Panc1 (cell line): ENCODE measurements at regions of chr18 and their contacts with region 1.

Region 1: GRCh38 chr18:55401638-55402191 is 186.3 kb downstream of the TCF4 start:
- DNase-seq: no peak
- ATAC-seq: peak; percentile 89
- H3K4me3 ChIP-seq: peak overlapping the region; percentile 24 to 25; a peak in 3 of 4 replicates
- H3K27ac ChIP-seq: peak overlapping the region; percentile 90
- H3K4me1 ChIP-seq: peaks cover 9% of the 10 kb centered on the region
- H3K27me3 ChIP-seq: no peaks in the 10 kb centered on the region
- CTCF ChIP-seq: no peak

Region 2: GRCh38 chr18:55096261-55096951 is 305.3 kb before region 1 on chr18:
- CTCF ChIA-PET with region 1: no interaction called
- POLR2A ChIA-PET with region 1: no interaction called
- in situ Hi-C with region 1: no loop called
- intact Hi-C with region 1: no loop called
- DNase-seq: no peak
- ATAC-seq: no peak
- H3K4me3 ChIP-seq: no peak overlapping the region
- H3K27ac ChIP-seq: no peak overlapping the region
- H3K4me1 ChIP-seq: no peaks in the 10 kb centered on the region
- H3K27me3 ChIP-seq: no peaks in the 10 kb centered on the region
- CTCF ChIP-seq: peak; percentile 22

Region 3: GRCh38 chr18:55422456-55423180 is 20.9 kb after region 1 on chr18:
- CTCF ChIA-PET with region 1: no interaction called
- POLR2A ChIA-PET with region 1: no interaction called
- in situ Hi-C with region 1: no loop called
- intact Hi-C with region 1: no loop called
- DNase-seq: no peak
- ATAC-seq: no peak
- H3K4me3 ChIP-seq: no peak overlapping the region; a peak in 1 of 4 replicates
- H3K27ac ChIP-seq: no peak overlapping the region
- H3K4me1 ChIP-seq: no peaks in the 10 kb centered on the region
- H3K27me3 ChIP-seq: no peaks in the 10 kb centered on the region
- CTCF ChIP-seq: no peak

Region 4: GRCh38 chr18:56451188-56451587 is 1049.5 kb after region 1 on chr18:
- CTCF ChIA-PET with region 1: no interaction called
- POLR2A ChIA-PET with region 1: interaction called, 11 read pairs
- in situ Hi-C with region 1: no loop called
- intact Hi-C with region 1: no loop called
- DNase-seq: no peak
- ATAC-seq: no peak
- H3K4me3 ChIP-seq: no peak overlapping the region
- H3K27ac ChIP-seq: no peak overlapping the region
- H3K4me1 ChIP-seq: no peaks in the 10 kb centered on the region
- H3K27me3 ChIP-seq: no peaks in the 10 kb centered on the region
- CTCF ChIP-seq: no peak